B cell (primary cell): ENCODE measurements at regions of chr7 and their contacts with region 1.

Region 1: DNA sequence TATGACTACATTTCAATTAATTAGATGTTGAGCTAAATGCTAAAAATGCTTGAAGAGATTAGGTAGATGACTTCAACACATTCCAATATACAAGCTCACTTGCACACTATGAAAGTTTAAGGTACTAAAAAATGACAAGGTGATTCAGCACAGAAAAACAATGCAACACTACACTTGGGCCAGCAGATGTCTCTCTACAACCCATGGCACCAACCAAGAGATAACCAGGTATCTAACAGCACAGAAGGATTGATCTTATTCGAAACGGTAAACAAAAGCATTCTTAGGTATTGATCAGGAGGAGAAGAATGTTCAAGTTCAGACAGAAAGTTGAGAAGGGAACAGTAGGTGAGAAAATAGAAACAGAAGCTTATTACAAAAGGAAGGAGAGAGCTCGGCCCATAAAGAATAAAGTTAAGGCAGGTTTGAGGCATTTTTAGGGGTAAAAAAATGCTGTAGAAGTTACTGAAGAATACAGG is 248.2 kb upstream of the KLF14 start:
- DNase-seq: peak; percentile 70
- ATAC-seq: peak; percentile 73
- H3K4me3 ChIP-seq: no peak overlapping the region
- H3K4me3 Mint-ChIP-seq: no peak overlapping the region
- H3K27ac ChIP-seq: peak overlapping the region; percentile 9 to 61
- H3K27ac Mint-ChIP-seq: no peak overlapping the region
- H3K4me1 ChIP-seq: peaks cover 13 to 16% of the 10 kb centered on the region in 2 donors
- H3K4me1 Mint-ChIP-seq: peaks cover 25% of the 10 kb centered on the region
- H3K27me3 ChIP-seq: no peaks in the 10 kb centered on the region
- H3K27me3 Mint-ChIP-seq: no peaks in the 10 kb centered on the region
- CTCF ChIP-seq: peak; percentile 87

Region 2: GRCh38 chr7:130941322-130942210 is 40.6 kb before region 1 on chr7:
- CTCF ChIA-PET with region 1: interaction called, 11 read pairs
- POLR2A ChIA-PET with region 1: no interaction called
- intact Hi-C with region 1: loop called (anchors 2 kb)
- DNase-seq: peak; percentile 55
- ATAC-seq: no peak
- H3K4me3 ChIP-seq: peak overlapping the region; percentile 9 to 42 (median 28)
- H3K4me3 Mint-ChIP-seq: peak overlapping the region; percentile 76
- H3K27ac ChIP-seq: peak overlapping the region; percentile 38 to 92
- H3K27ac Mint-ChIP-seq: peak overlapping the region; percentile 65
- H3K4me1 ChIP-seq: peaks cover 34 to 38% of the 10 kb centered on the region in 2 donors
- H3K4me1 Mint-ChIP-seq: peaks cover 83% of the 10 kb centered on the region
- H3K27me3 ChIP-seq: no peaks in the 10 kb centered on the region
- H3K27me3 Mint-ChIP-seq: no peaks in the 10 kb centered on the region
- CTCF ChIP-seq: no peak

Region 3: GRCh38 chr7:130966246-130967009 is 15.8 kb before region 1 on chr7:
- CTCF ChIA-PET with region 1: interaction called, 24 read pairs
- POLR2A ChIA-PET with region 1: no interaction called
- intact Hi-C with region 1: loop called (anchors 2 kb)
- DNase-seq: no peak
- ATAC-seq: no peak
- H3K4me3 ChIP-seq: no peak overlapping the region
- H3K4me3 Mint-ChIP-seq: no peak overlapping the region
- H3K27ac ChIP-seq: peak overlapping the region in 1 of 2 donors; percentile 4
- H3K27ac Mint-ChIP-seq: no peak overlapping the region
- H3K4me1 ChIP-seq: peaks cover 29 to 31% of the 10 kb centered on the region in 2 donors
- H3K4me1 Mint-ChIP-seq: peaks cover 58% of the 10 kb centered on the region
- H3K27me3 ChIP-seq: no peaks in the 10 kb centered on the region
- H3K27me3 Mint-ChIP-seq: no peaks in the 10 kb centered on the region
- CTCF ChIP-seq: no peak

Region 4: GRCh38 chr7:130996841-130997231 is 14.6 kb after region 1 on chr7:
- CTCF ChIA-PET with region 1: interaction called, 24 read pairs
- POLR2A ChIA-PET with region 1: interaction called, 3 read pairs
- intact Hi-C with region 1: no loop called
- DNase-seq: peak; percentile 46
- ATAC-seq: peak; percentile 44
- H3K4me3 ChIP-seq: no peak overlapping the region
- H3K4me3 Mint-ChIP-seq: peak overlapping the region; percentile 55
- H3K27ac ChIP-seq: peak overlapping the region in 1 of 2 donors; percentile 59
- H3K27ac Mint-ChIP-seq: peak overlapping the region; percentile 84
- H3K4me1 ChIP-seq: peaks cover 55 to 57% of the 10 kb centered on the region in 2 donors
- H3K4me1 Mint-ChIP-seq: peaks cover 66% of the 10 kb centered on the region
- H3K27me3 ChIP-seq: no peaks in the 10 kb centered on the region
- H3K27me3 Mint-ChIP-seq: no peaks in the 10 kb centered on the region
- CTCF ChIP-seq: no peak

Region 5: DNA sequence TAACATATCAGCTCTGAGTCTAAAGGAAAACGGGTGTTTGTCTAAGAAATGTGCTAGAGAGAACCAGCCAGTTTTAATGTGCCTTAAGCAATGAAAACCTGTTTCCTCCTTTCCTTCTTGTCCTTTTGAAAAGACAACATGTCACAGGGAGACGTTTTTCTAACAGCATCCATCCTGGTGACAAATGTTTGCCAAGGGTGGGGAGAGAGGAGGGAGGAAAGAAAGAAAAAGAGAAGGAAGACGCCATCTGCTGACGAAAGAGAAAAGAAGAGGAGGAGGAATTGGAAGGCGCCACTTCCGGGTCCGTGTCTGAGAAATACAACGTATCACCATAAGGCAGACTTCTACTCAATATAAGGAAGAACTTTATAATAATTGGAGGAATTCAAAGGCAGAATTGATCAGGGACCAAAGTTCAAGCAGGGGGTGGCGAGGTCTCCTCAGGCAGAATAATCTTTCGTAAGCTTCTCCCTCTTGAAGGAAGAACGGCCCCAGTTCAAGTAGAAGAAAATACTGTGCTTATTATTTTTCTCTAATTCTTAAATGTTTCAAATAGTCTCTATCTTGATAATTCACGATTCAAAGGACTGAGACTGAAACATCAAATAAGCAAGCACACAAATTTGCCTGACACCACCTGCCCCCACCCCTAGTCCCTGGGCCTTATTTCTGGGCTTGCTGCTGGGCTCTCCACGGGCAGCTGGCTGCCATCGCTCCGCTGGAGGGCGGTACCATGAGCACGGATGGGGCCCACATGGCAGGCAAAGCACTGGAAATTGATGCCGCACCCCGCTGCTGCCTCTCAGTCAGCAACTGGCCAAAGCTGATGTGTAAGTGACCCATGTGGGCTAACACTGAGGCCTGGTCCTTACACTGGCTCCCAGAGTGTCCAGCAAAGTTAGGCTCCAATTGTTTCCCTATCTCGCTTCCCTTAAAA is 25.5 kb after region 1 on chr7:
- CTCF ChIA-PET with region 1: interaction called, 19 read pairs
- POLR2A ChIA-PET with region 1: no interaction called
- intact Hi-C with region 1: loop called (anchors 2 kb)
- DNase-seq: peak; percentile 82
- ATAC-seq: peak; percentile 70
- H3K4me3 ChIP-seq: no peak overlapping the region
- H3K4me3 Mint-ChIP-seq: peak overlapping the region; percentile 82
- H3K27ac ChIP-seq: peak overlapping the region; percentile 56 to 86
- H3K27ac Mint-ChIP-seq: peak overlapping the region; percentile 89
- H3K4me1 ChIP-seq: peaks cover 59 to 62% of the 10 kb centered on the region in 2 donors
- H3K4me1 Mint-ChIP-seq: peaks cover 77% of the 10 kb centered on the region
- H3K27me3 ChIP-seq: no peaks in the 10 kb centered on the region
- H3K27me3 Mint-ChIP-seq: no peaks in the 10 kb centered on the region
- CTCF ChIP-seq: peak; percentile 72

Region 6: DNA sequence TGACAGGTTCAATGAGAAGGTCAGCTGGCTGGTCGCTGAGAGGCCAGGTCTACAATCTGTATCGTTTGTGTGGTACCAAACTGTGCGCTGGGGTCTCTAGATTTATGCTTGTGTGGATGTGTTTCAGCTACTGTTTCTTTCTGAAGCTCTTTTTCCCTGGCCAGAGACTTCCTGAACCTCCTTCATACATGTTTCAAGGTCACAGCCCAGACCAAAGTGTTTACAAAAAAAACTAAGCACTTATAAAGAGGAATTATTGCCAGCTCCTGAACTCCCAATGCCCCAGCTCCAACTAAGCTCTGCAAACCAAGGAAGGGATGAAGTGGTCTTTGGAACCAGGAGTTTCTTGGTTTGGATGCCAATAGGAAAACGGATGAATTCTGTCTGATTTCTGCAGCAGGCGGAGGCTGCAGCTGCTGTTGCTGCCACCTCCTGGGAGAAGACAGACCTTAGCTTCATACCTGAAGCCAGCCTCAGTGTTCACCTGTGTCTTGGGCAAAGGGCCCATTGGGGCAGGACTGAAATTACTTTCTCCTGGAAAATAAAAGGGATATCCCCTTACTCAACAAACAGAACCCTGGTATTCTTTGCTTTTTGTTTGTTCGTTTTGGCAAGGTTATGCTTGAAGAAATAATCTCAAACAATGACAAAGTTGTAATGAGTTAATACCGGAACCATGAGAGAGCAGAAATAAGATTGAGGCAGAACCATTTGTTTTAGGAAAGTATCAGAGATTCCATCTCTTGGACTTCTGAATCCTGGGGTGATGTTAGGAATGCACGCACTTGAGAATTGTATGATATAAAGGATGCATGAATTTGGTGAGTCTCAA is 320.9 kb after region 1 on chr7:
- CTCF ChIA-PET with region 1: interaction called, 18 read pairs
- POLR2A ChIA-PET with region 1: no interaction called
- intact Hi-C with region 1: loop called (anchors 1 kb)
- DNase-seq: peak; percentile 42
- ATAC-seq: no peak
- H3K4me3 ChIP-seq: no peak overlapping the region
- H3K4me3 Mint-ChIP-seq: no peak overlapping the region
- H3K27ac ChIP-seq: no peak overlapping the region
- H3K27ac Mint-ChIP-seq: no peak overlapping the region
- H3K4me1 ChIP-seq: no peaks in the 10 kb centered on the region
- H3K4me1 Mint-ChIP-seq: peaks cover 2% of the 10 kb centered on the region
- H3K27me3 ChIP-seq: no peaks in the 10 kb centered on the region
- H3K27me3 Mint-ChIP-seq: no peaks in the 10 kb centered on the region
- CTCF ChIP-seq: peak; percentile 41

Region 7: DNA sequence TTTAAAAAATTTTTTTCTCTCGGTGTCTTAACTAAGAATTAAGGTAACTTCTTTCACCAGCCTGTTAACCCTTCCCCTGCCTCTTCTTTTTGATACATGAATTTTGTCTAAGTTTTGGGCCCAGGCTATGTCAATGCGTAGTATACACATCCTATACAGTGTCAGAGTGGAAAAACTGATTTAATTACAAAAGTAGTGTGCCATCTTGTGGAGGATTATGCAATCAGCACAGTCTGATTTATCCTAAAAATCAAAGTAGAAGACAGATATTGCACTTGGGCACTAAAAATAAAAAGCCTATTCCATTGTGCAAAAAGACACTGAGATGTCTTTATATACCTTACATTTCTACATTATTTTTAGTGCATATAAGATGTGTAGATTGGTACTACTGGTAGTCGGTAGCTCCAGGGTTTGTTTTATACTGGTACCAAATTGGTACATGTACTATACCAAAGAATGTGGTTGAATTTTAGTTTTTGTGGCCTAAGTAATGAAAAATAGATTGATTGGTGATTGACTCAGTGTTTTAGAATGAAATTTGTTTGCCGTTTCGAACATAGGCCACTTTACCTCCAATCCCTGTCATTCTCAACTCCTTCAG is 442.1 kb after region 1 on chr7:
- CTCF ChIA-PET with region 1: interaction called, 17 read pairs
- POLR2A ChIA-PET with region 1: no interaction called
- intact Hi-C with region 1: loop called (anchors 1 kb)
- DNase-seq: peak; percentile 56
- ATAC-seq: peak; percentile 69
- H3K4me3 ChIP-seq: no peak overlapping the region
- H3K4me3 Mint-ChIP-seq: no peak overlapping the region
- H3K27ac ChIP-seq: no peak overlapping the region
- H3K27ac Mint-ChIP-seq: no peak overlapping the region
- H3K4me1 ChIP-seq: no peaks in the 10 kb centered on the region
- H3K4me1 Mint-ChIP-seq: peaks cover 2% of the 10 kb centered on the region
- H3K27me3 ChIP-seq: no peaks in the 10 kb centered on the region
- H3K27me3 Mint-ChIP-seq: no peaks in the 10 kb centered on the region
- CTCF ChIP-seq: peak; percentile 80